ENCODE measurements at regions of chr15 and their contacts with region 1.

Region 1: GRCh38 chr15:101641166-101641764 is 10.9 kb downstream of the TM2D3 start:
- DNase-seq: peak; percentile 59
- H3K4me3 Mint-ChIP-seq: no peak overlapping the region
- H3K27ac Mint-ChIP-seq: peak overlapping the region; percentile 70
- H3K4me1 Mint-ChIP-seq: peaks cover 17% of the 10 kb centered on the region
- H3K27me3 Mint-ChIP-seq: no peaks in the 10 kb centered on the region

Region 2: GRCh38 chr15:101008158-101009139 is 632.8 kb before region 1 on chr15:
- intact Hi-C with region 1: loop called (anchors 10 kb)
- DNase-seq: peak; percentile 80
- H3K4me3 Mint-ChIP-seq: peak overlapping the region; percentile 89
- H3K27ac Mint-ChIP-seq: peak overlapping the region; percentile 18
- H3K4me1 Mint-ChIP-seq: peaks cover 19% of the 10 kb centered on the region
- H3K27me3 Mint-ChIP-seq: peaks cover 21% of the 10 kb centered on the region

Region 3: DNA sequence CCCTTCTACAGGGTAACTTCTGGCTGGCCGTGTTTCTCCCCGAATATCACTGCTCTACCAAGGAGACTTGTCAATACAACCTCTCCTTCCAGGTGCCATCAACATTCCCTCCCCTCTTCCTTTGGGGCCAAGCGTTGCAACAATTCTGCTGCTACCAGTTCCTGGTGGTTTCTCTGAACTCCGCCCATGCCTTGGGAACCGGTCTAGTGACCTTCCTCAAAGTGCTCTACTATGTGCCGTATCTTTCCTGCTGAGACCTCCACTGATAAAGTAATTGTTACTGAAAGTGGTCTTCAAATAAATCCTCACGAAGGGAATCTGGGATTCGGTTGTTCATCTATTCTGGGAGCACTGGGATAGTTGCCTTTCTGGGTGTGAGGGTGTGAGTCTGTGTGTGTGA is 178.0 kb before region 1 on chr15:
- intact Hi-C with region 1: loop called (anchors 5 kb)
- DNase-seq: no peak
- H3K4me3 Mint-ChIP-seq: no peak overlapping the region
- H3K27ac Mint-ChIP-seq: no peak overlapping the region
- H3K4me1 Mint-ChIP-seq: peaks cover 29% of the 10 kb centered on the region
- H3K27me3 Mint-ChIP-seq: peaks cover 6% of the 10 kb centered on the region

Region 4: DNA sequence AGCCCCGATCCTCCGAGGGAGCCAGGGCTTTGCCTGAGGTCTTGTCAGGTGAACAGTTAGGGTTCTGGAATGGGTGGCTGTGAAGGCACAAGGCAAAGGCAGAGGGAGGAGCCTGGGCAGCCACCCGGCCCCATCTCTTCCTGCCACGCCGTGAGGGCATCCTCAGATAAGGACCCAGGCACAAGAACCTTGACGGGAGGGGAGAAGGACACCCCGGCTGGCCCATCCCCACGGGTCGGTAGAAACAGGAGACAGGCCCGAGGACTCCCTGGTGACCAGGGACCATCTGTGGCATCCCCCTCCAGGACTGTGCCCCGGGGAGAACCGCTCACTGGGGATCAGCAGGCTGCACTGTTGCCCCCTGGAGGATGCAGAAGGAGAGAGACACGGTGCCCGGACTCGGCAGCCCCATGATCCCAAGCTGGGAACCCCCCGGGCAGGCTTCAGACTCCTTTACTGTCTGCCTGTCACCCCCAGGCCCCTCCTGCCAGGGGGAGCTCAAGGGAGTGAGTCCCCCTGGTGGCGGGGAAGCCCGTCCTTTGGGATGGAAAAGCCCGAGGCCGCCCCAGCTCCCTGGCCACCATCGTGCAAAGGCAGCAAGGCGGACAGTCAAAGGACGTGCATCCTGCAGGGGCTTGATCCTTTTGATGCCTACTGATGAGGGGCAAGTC is 139.4 kb before region 1 on chr15:
- intact Hi-C with region 1: loop called (anchors 2 kb)
- DNase-seq: peak; percentile 21
- H3K4me3 Mint-ChIP-seq: peak overlapping the region; percentile 24
- H3K27ac Mint-ChIP-seq: peak overlapping the region; percentile 54
- H3K4me1 Mint-ChIP-seq: peaks cover 27% of the 10 kb centered on the region
- H3K27me3 Mint-ChIP-seq: peaks cover 4% of the 10 kb centered on the region

Region 5: DNA sequence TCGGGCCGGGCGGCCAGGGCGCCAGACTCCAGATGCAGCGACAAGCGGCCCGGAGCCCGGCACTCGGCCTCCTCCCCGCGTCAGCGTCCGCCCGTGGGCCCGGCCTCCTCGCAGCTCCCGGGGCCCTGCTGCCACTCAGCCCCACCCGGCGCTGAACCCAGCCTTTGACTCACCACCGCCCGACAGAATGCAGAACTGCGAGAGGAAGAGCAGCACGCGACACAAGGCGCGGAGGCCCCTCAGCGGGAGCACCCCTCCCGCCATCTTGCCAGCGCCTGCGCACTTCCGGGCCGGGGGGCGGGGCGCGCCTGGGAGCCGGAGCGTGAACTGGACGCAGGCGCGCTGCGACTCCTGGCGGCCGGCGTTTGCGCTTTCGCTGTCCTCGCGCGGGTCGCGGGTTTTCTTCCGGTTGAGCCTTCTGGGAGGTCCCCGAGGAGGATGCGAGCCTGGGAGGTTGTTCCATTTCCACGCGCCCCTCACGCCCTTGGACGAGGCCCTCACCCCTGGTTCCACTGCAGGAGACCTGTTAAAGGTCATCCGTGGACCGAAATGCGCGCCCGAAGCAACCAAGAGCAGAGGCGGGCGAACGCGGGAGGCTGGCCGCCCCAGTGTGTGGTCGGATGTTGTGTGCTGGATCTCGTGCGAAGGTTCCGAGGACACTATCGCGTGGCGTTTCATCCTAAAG is 11.0 kb after region 1 on chr15 and contains the start of gene TM2D3:
- intact Hi-C with region 1: loop called (anchors 1 kb)
- DNase-seq: peak; percentile 94
- H3K4me3 Mint-ChIP-seq: peak within 1 kb of the TSS; percentile 93
- H3K27ac Mint-ChIP-seq: peak within 1 kb of the TSS; percentile 93
- H3K4me1 Mint-ChIP-seq: peaks cover 36% of the 10 kb centered on the region
- H3K27me3 Mint-ChIP-seq: no peaks in the 10 kb centered on the region
- total RNA-seq, gene TM2D3: 57.1 and 62.4 TPM in 2 replicates

Region 6: DNA sequence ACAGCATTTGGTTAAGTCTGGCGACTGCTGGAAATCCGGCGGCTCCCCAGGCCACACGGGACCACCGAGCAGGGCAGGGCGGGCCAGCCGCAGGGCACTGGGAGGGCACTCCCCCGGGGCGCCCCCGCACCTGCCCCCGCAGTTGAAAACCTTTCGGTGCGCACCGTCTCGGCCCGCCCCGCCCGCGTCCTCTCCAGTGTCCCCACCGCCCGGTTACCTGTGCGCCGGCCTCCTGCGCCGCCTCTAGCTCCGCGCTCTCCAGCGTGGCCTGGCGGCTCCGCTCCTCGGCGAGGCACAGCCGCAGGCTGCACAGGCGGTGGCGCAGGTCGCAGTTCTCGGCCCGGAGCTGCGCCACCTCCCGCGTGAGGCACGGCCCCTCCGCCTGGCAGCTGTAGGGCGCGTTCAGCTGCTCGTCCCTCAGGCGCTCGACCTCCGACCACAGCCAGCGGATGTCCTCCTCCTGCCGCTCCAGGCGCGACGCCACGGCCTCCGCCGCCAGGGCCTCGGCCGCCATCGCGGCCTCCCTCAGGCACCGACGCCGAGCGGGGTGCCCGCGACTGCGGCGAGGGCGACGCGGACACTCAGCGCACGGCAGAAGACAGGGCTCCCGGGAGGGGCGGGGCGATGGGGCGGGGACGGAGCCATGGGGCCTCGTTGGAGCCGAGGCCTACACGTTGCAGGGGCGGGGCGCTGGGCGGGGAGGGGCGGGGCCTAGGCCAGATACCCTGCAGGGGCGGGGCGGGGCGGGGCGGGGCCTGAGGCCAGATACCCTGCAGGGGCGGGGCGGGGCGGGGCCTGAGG is 82.8 kb after region 1 on chr15 and contains the start of gene TARS3:
- intact Hi-C with region 1: loop called (anchors 1 kb)
- DNase-seq: peak; percentile 83
- H3K4me3 Mint-ChIP-seq: peak within 1 kb of the TSS; percentile 88
- H3K27ac Mint-ChIP-seq: peak within 1 kb of the TSS; percentile 95
- H3K4me1 Mint-ChIP-seq: peaks cover 30% of the 10 kb centered on the region
- H3K27me3 Mint-ChIP-seq: peaks cover under 1% of the 10 kb centered on the region
- total RNA-seq, gene TARS3: 13.9 and 15.2 TPM in 2 replicates